WTC11 (cell line): ENCODE measurements at regions of chr3 and their contacts with region 1.

Region 1: DNA sequence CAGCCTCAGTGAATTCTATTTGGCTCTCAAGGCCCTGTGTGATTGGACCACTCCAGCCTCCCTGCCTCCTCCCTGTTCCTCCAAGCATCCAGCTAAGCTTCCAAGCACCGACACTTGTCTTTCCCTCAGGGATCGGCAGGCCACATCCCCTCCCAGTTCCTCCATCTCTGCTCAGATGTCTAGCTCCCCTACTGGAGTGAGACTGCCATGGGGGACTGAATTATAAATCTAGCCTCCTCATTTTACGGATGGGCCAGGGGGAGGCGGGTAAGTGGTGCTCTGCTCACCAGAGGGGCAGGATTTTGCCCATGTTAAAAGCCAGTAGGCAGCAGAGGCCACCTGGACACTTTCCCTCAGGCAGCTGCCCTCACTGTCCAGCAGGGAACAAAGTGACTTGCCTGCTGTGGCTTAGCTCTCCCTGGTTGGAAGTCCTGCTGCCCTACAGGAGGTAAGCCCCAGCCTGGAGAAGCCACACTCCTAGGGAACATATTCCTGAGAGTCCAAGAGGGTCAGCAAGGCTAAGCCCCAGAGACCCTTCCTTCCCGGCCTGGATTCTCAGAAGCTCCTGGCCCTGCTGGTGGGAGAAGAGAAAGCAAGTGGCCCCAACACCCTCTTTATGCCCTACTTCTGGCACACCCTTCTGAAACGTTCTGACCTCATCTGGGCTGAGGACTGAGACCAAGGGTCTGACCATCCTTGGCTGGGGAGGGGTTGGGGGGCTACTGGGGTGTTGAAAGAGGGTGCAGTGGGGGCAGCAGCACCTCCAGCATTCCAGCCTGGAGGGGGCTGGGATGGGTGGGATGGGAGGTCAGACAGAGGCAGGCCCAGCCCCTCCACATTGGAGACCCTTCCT is 9.1 kb upstream of the HHATL start:
- DNase-seq: peak; percentile 9
- ATAC-seq: peak; percentile 84
- H3K4me3 Mint-ChIP-seq: no peak overlapping the region
- H3K27ac Mint-ChIP-seq: no peak overlapping the region
- H3K4me1 Mint-ChIP-seq: no peaks in the 10 kb centered on the region
- H3K27me3 Mint-ChIP-seq: no peaks in the 10 kb centered on the region
- CTCF ChIP-seq: no peak

Region 2: DNA sequence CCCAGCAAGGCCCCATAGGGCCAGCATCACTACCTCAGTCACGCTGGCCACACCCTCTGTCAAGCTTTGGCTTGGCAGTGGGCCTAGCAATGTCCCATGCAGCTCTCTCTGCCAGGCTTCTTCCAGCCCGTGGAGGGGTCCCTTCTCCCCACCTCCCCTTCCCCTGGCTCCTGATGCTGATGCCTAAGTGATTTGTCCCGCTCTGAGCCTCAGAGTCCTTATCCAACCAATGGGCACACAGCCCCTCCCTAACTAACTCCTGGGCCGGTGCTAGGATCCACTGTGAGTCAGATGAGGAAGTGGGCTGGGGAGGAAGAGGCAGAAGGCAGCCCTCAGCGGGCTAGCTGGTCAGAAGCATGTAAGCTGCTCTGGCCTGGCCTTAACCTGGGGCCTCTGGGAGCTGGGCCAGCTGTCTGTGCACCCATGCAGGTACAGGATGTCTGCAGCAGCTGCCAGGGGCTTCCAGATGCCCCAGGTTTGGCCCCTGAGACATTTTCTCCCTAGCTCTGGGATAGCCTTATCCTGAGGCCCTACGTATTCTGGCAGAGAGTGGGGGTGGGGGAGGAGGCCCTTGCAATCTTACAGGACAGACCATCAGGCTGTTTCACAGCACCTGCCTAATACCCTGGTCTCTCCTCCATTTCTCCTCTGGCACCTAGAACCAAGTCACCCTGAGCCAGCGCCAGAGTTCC is 59.0 kb before region 1 on chr3:
- CTCF ChIA-PET with region 1: interaction called, 12 read pairs
- POLR2A ChIA-PET with region 1: no interaction called
- DNase-seq: no peak
- ATAC-seq: peak; percentile 2
- H3K4me3 Mint-ChIP-seq: peak overlapping the region; percentile 87
- H3K27ac Mint-ChIP-seq: 0 out of 2 replicates have a peak overlapping the region, but pooled peaks have one; percentile 12
- H3K4me1 Mint-ChIP-seq: peaks cover 47% of the 10 kb centered on the region
- H3K27me3 Mint-ChIP-seq: no peaks in the 10 kb centered on the region
- CTCF ChIP-seq: no peak

Region 3: DNA sequence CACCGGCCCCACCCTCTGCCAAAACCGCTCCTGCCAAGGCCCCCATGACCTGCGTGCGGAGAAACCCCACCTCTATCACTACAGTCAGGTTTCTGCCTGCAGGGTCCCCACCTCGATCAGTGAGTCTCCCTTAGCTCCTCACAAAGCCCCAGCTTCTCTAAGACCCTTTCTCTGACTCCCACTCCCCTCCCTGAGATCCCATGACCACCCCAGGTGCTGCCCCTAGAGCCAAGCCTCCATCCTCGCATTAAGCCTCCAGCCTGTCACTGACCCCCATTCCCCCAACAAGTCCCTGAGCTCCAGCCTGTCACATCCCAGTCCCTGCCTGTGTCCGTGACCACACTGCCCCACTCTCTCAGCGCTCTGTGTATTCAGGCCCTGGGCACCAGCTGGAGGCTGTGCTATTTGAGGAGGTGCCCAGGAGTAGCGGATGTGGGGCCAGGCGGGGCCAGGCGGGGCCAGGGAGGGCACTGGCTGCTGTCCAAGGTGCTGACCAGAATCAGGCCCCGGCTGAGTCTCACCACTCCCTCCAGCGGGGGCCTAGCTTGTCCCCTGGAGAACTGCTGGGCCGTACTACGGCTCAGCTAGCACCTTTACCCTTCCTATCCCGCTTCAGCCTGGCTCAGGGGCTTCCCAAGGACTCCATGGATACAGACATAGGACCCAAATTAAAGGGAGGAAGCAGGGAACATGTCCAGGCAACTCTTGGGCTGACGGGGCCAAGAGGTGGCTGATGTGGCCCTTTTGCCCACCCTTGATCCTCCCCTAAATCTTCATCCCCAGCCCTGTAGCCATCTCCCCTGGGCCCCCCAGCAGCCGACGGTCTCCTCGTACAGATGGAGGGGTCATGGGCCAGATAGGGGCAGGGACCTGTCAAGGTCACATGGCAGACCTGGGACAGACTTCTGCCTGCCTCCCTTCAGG is 10.3 kb before region 1 on chr3:
- CTCF ChIA-PET with region 1: interaction called, 10 read pairs
- POLR2A ChIA-PET with region 1: no interaction called
- DNase-seq: peak; percentile 82
- ATAC-seq: peak; percentile 93
- H3K4me3 Mint-ChIP-seq: no peak overlapping the region
- H3K27ac Mint-ChIP-seq: no peak overlapping the region
- H3K4me1 Mint-ChIP-seq: peaks cover 8% of the 10 kb centered on the region
- H3K27me3 Mint-ChIP-seq: no peaks in the 10 kb centered on the region
- CTCF ChIP-seq: no peak

Region 4: GRCh38 chr3:42732829-42733459 is 21.2 kb after region 1 on chr3:
- CTCF ChIA-PET with region 1: interaction called, 14 read pairs
- POLR2A ChIA-PET with region 1: no interaction called
- DNase-seq: no peak
- ATAC-seq: peak; percentile 21
- H3K4me3 Mint-ChIP-seq: no peak overlapping the region
- H3K27ac Mint-ChIP-seq: no peak overlapping the region
- H3K4me1 Mint-ChIP-seq: peaks cover 48% of the 10 kb centered on the region
- H3K27me3 Mint-ChIP-seq: peaks cover 11% of the 10 kb centered on the region; the same call in 1 of the 2 replicates
- CTCF ChIP-seq: no peak